Breast epithelium (tissue), 4 donors: ENCODE measurements at regions of chr19 and their contacts with region 1.

Region 1: DNA sequence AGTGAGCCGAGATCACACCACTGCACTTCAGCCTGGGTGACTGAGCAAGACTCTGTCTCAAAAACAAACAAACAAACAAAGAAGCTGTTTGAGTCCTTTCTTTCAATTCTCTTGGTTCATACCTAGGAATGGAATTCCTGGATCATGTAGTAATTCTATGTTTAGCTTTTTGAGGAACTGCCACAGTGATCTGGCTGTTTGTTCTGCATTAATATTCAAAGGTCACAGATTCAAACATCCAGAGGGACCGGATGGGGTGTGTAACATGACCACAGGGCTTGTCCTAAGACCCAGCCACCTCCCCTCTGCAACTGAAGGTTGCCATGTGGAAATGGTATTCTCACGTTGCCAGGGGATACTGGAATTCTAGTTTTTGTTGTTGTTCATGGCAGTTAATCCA is 10.2 kb downstream of the COLGALT1 start:
- DNase-seq: no peak
- H3K4me3 ChIP-seq: no peak overlapping the region
- H3K27ac ChIP-seq: no peak overlapping the region
- H3K4me1 ChIP-seq: no peaks in the 10 kb centered on the region
- H3K27me3 ChIP-seq: no peaks in the 10 kb centered on the region
- CTCF ChIP-seq: no peak
- POLR2A ChIP-seq: no peak

Region 2: DNA sequence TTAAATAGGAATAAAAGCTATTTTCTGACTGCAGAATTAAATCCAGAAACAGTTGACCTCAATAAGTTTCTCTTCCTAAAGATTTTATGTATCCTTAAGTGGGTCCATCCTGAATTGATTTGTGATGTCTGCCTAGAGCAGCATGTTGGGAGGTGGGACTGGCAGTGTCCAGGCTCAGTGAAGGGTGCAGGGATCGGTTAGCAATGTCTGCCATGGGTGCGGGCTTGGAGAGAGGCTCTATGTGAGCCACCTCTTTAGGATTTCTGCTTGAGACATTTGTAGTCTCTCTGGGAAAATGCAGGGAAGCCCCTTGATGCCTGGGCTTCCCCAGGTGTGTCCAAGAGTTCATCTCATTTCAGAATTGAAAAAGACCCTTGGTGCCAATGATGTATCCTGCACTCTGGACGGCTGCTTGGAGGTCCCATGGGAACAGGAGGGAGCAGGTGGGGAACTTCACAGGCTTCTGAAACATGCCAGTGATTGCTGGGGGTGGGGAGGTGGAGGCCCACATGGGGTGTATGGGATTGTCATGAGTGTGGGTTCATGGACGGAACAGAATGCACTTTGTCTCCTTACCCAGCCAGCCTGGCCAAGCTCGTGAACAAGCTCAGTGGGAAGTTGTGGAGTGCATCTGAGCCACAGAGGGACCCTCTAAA is 16.4 kb before region 1 on chr19:
- intact Hi-C with region 1: loop called (anchors 2 kb)
- DNase-seq: no peak
- H3K4me3 ChIP-seq: no peak overlapping the region
- H3K27ac ChIP-seq: no peak overlapping the region
- H3K4me1 ChIP-seq: no peaks in the 10 kb centered on the region
- H3K27me3 ChIP-seq: no peaks in the 10 kb centered on the region
- CTCF ChIP-seq: no peak
- POLR2A ChIP-seq: no peak